Activated CD8-positive, alpha-beta T cell treated with anti-CD3 and anti-CD28 coated beads for 36 hours (primary cell): ENCODE measurements at regions of chr10 and their contacts with region 1.

Region 1: DNA sequence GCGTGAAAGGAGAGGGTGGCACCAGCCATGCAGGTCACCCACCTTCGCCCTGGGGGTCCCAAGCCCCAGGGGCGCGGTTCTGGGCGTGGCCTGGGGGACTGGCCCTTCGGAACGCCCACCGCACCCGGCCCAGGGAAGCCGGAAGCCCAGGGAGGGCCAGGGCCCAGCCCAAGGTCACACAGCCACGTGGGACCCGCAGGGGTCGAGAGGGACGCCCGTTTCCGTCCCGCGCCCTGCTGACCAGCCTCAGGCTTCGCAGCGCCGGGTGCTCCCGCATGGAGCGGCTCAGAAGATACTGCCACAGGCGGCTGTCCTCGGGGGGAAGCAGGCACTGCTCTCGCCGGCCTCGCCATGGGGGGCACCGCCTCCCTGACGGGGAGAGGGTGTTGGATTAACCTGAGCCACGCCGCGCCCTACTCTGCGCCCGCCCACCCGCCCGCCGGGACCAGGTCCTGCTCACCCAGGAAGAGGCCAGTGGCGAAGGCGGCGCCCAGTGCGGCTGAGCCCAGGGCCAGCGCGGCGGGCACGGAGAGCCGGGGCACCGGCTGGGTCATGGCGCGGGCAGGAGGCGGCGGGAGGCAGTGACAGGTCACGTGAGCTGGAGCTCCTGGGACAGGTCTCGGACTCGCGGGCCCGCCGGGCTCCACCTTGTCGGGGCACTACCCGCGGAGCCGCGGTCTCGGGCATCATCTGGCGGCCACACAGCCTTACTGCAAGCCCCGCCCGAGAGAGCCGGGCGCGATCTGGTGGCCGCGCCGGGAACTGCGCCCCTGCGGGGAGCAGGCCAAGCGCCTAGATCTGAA is at the start of gene COMTD1:
- DNase-seq: peak; percentile 96
- ATAC-seq: peak; percentile 77
- H3K4me3 Mint-ChIP-seq: peak within 1 kb of the TSS; percentile 81
- H3K27ac Mint-ChIP-seq: peak within 1 kb of the TSS; percentile 94
- H3K4me1 Mint-ChIP-seq: peaks cover 24% of the 10 kb centered on the region
- H3K27me3 Mint-ChIP-seq: no peaks in the 10 kb centered on the region
- CTCF ChIP-seq: peak; percentile 100
- total RNA-seq, gene COMTD1: 54.5 to 58.1 TPM

Region 2: DNA sequence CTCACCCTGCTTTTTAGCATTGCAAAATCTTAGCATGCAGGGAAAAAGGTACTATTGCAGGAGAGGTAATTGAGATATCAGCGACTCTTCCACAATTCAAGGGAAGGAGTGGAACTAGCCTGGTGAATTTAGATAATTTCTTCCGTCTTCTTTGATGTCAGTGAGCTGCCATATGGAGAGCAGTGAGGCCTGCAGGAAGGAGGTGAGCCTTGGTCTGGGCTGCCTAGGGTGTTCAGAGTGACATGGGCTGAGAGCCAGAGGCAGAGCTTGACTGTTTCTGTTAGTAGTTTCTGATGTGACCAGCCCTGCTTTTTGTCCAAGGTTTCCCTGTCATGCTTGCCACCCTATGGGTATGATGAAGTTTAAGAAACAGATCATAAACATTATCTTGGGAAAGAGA is 380.5 kb before region 1 on chr10:
- CTCF ChIA-PET with region 1: no interaction called
- POLR2A ChIA-PET with region 1: no interaction called
- intact Hi-C with region 1: no loop called
- DNase-seq: peak; percentile 21
- ATAC-seq: peak; percentile 35
- H3K4me3 Mint-ChIP-seq: peak overlapping the region; percentile 5
- H3K27ac Mint-ChIP-seq: peak overlapping the region; percentile 87
- H3K4me1 Mint-ChIP-seq: peaks cover 49% of the 10 kb centered on the region
- H3K27me3 Mint-ChIP-seq: no peaks in the 10 kb centered on the region
- CTCF ChIP-seq: no peak

Region 3: DNA sequence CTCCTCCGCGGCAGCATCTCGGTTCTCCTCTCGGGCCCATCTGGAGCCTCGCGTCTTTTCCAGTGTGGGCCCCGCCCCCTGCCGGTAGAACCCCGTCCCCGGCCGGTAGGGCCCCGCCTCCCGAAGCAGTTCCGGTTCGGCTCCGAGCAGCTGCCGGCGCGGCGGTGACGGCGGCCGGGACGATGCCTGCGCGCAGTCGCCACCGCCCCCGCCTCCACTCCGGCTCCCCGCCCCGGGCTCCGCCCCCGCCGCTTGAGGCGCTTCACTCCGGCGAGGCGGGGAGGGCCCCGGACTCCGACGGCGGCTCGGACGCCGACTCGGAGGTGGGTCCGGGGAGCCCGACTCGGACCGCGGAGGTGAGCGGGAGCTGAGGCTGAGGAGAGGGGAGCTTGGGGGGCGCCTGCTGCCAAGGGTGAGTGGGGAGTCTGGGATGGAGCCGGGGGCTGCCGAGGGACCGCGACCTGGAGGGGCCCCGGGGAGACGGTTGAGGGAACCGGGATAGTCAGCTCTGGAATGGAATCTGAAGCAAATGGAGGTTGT is 124.1 kb before region 1 on chr10 and contains the start of gene SAMD8:
- CTCF ChIA-PET with region 1: interaction called, 12 read pairs
- POLR2A ChIA-PET with region 1: interaction called, 12 read pairs
- intact Hi-C with region 1: loop called (anchors 5 kb)
- DNase-seq: peak; percentile 99
- ATAC-seq: peak; percentile 91
- H3K4me3 Mint-ChIP-seq: peak within 1 kb of the TSS; percentile 88
- H3K27ac Mint-ChIP-seq: peak within 1 kb of the TSS; percentile 93
- H3K4me1 Mint-ChIP-seq: peaks cover 46% of the 10 kb centered on the region
- H3K27me3 Mint-ChIP-seq: no peaks in the 10 kb centered on the region
- CTCF ChIP-seq: no peak
- total RNA-seq, gene SAMD8: 21.9 to 23.7 TPM

Region 4: GRCh38 chr10:75223507-75223906 is 12.1 kb before region 1 on chr10:
- CTCF ChIA-PET with region 1: interaction called, 6 read pairs
- POLR2A ChIA-PET with region 1: interaction called, 12 read pairs
- intact Hi-C with region 1: no loop called
- DNase-seq: no peak
- ATAC-seq: no peak
- H3K4me3 Mint-ChIP-seq: no peak overlapping the region
- H3K27ac Mint-ChIP-seq: peak overlapping the region; percentile 69
- H3K4me1 Mint-ChIP-seq: peaks cover 58% of the 10 kb centered on the region
- H3K27me3 Mint-ChIP-seq: no peaks in the 10 kb centered on the region
- CTCF ChIP-seq: no peak

Region 5: GRCh38 chr10:75272896-75273295 is 37.3 kb after region 1 on chr10:
- CTCF ChIA-PET with region 1: no interaction called
- POLR2A ChIA-PET with region 1: no interaction called
- intact Hi-C with region 1: no loop called
- DNase-seq: no peak
- ATAC-seq: no peak
- H3K4me3 Mint-ChIP-seq: no peak overlapping the region
- H3K27ac Mint-ChIP-seq: no peak overlapping the region
- H3K4me1 Mint-ChIP-seq: no peaks in the 10 kb centered on the region
- H3K27me3 Mint-ChIP-seq: peaks cover 3% of the 10 kb centered on the region
- CTCF ChIP-seq: no peak

Region 6: GRCh38 chr10:75408911-75409885 is 173.6 kb after region 1 on chr10:
- CTCF ChIA-PET with region 1: no interaction called
- POLR2A ChIA-PET with region 1: no interaction called
- intact Hi-C with region 1: no loop called
- DNase-seq: peak; percentile 35
- ATAC-seq: peak; percentile 87
- H3K4me3 Mint-ChIP-seq: peak overlapping the region; percentile 60
- H3K27ac Mint-ChIP-seq: no peak overlapping the region
- H3K4me1 Mint-ChIP-seq: peaks cover 10% of the 10 kb centered on the region
- H3K27me3 Mint-ChIP-seq: peaks cover 61% of the 10 kb centered on the region
- CTCF ChIP-seq: no peak